ENCODE measurements at regions of chr7 and their contacts with region 1.

Region 1: DNA sequence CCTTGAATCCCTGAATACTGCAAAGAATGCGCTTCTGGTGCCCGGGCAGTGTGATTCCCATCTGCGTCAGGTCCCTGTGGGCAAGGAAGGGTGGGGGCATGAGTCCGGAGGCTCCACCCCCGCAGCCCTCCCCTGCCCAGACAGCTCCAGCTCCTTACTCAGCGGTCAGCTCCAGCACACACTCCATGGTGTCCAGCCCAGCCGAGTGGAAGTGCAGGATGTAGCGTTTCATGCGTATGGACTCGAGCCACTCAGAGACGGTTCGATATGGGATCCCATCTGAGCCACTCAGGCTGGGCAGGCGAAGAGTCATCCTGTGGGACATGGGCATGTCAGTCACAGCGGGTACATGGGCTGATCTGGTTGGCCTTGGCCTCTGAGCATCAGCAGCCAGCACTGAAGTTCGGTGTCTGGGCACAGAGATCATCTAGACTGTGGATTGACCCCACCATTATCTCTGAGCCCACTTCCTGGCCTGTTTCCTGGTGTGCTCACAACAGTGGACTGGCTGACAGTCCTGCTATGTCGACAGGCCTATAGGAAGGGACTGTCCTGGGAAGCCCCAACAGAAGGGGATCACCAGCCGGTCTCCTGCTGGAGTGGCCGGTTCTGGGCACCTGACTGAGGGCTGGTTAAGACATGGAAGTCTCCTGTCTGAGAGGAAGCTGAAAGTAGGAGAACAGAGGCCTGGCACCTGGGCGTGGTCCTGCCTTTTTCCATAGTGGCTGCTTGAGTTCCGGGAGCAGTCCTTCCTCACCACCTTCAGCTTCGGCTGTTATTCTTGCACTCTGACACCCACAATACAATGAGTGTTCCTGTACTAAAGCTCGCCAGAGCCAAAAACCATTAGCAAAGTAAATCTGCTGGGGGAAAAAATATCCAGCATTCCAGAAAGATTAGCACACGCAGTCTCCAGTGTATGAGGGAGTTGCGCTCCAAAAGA is 10.6 kb downstream of the ZYX start:
- DNase-seq: peak; percentile 63
- H3K4me3 ChIP-seq: no peak overlapping the region
- H3K27ac ChIP-seq: peak overlapping the region; percentile 86
- H3K27me3 ChIP-seq: no peaks in the 10 kb centered on the region
- CTCF ChIP-seq: no peak

Region 2: DNA sequence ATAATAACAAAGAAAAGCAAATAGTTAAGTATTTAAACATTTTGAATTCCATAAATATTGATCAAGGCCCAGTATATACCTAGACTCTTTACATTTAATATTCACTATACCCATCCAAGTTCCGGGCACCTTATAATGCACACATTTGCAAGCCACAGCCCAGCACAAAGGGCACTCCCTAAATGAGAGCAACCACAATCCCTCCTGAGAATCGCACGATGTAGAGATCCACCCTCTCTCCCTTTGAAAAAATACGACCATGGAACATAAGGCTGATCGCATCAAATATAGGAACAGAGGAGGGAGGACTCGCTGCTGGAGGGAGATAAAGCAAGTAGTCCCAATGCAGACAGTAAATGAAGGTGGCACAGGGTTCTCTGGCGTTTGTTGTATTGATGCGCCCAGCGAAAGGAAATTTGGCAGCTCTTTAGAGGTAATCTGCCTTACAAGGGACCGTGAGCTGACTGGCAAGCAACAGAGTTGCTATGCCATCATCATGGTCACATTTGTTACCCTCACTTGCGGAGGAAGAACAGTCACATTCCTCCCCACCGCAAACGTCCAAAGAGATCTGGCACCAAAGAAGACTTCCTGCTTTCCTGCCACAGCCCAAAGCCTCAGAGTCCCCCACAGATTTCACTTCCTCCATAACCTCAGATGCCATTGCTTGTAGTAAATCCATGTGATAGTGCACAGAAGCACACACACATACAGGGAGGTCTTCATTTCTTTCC is 186.0 kb before region 1 on chr7:
- CTCF ChIA-PET with region 1: no interaction called
- POLR2A ChIA-PET with region 1: no interaction called
- DNase-seq: no peak
- H3K4me3 ChIP-seq: no peak overlapping the region
- H3K27ac ChIP-seq: no peak overlapping the region
- H3K27me3 ChIP-seq: no peaks in the 10 kb centered on the region
- CTCF ChIP-seq: no peak

Region 3: DNA sequence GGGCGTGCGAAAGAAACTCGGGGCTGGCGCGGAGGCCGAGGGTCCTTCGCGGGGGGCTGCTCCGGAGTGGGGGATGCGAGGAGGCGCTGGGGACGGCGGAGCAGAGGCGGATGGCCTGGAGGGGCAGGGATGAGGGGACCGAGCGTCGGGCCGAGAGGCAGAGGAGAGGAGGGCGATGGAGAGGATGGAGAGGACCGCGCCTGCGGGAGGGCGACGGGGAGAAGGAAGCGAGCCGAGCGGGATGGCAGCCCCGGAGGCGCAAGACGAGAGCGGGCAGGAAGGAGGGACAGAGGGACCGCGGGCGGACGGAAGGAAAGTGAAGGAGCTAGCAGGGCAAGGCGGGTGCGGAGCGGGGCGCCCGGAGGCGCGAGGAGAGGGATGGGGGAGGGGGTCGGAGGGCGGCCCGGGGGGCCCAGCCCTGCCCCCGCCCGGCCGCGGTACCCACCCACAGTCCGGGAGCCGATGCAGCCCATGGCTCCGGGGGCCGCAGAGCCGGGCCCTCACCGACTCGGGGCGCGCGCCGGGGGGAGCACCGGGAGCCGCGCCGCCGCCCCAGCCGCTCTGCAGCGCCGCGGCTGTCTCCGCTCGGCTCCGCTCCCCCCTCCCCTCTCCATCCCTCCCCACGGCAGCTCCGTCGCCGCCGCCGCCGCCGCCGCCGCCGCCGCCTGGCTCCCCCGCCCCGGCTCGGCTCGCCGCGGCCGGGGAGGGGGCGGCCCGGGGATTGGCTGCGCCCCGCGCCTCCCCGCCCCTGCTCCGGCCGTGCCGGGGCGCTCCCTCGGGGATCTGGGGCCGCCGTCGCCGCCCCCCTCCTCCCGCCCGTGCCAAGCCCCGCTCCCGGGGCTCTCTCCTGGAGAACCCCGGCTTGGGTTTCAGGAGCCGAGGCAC is 29.4 kb before region 1 on chr7 and contains the start of gene FAM131B:
- CTCF ChIA-PET with region 1: no interaction called
- POLR2A ChIA-PET with region 1: no interaction called
- DNase-seq: no peak
- H3K4me3 ChIP-seq: peak within 1 kb of the TSS; percentile 69
- H3K27ac ChIP-seq: no peak within 1 kb of the TSS
- H3K27me3 ChIP-seq: peaks cover 38% of the 10 kb centered on the region
- CTCF ChIP-seq: no peak
- polyA plus RNA-seq, gene FAM131B: 3.1 and 4.2 TPM in 2 replicates

Region 4: GRCh38 chr7:143408686-143409561 is 17.2 kb after region 1 on chr7 and contains the start of gene EPHA1:
- CTCF ChIA-PET with region 1: interaction called, 6 read pairs
- POLR2A ChIA-PET with region 1: interaction called, 43 read pairs
- DNase-seq: no peak
- H3K4me3 ChIP-seq: no peak within 1 kb of the TSS
- H3K27ac ChIP-seq: no peak within 1 kb of the TSS
- H3K27me3 ChIP-seq: peaks cover 13% of the 10 kb centered on the region
- CTCF ChIP-seq: peak; percentile 25
- polyA plus RNA-seq, gene EPHA1: 0.09 TPM in 1 of 2 replicates, not detected in the other

Region 5: GRCh38 chr7:143416565-143417149 is 24.9 kb after region 1 on chr7:
- CTCF ChIA-PET with region 1: interaction called, 14 read pairs
- POLR2A ChIA-PET with region 1: interaction called, 6 read pairs
- DNase-seq: no peak
- H3K4me3 ChIP-seq: no peak overlapping the region
- H3K27ac ChIP-seq: no peak overlapping the region
- H3K27me3 ChIP-seq: no peaks in the 10 kb centered on the region
- CTCF ChIP-seq: peak; percentile 82